GM13976 (cell line): ENCODE measurements at regions of chr1 and their contacts with region 1.

Region 1: GRCh38 chr1:231584921-231585320 is 41.7 kb upstream of the DISC1 start:
- DNase-seq: no peak
- CTCF ChIP-seq: no peak

Region 2: DNA sequence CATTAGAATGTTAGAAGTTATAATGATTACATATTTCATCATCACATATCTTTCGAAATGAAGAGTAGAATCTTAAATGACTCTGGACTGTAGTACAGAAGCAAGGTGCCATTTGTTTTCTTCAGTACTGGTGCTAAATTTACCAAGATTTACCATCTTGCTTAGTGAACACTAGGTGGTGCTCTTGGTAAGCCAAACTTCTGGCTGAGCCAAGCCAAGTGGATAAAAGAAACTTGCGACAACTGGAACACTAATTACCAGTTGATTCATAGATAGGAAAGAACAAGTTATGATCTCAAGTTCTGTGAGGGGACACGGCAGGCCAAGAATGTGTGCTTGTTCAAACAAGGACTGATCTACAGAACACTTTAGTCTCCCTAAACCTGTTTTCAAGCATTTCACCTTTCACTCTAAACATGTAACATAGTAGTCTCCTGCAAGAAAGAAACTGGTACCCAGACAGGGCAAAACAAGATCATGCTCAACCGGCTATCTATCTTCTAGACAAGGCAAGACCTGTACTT is 227.0 kb before region 1 on chr1:
- in situ Hi-C with region 1: loop called (anchors 5 kb)
- DNase-seq: peak; percentile 68
- CTCF ChIP-seq: peak; percentile 67

Region 3: GRCh38 chr1:231428377-231428776 is 156.5 kb before region 1 on chr1:
- in situ Hi-C with region 1: no loop called
- DNase-seq: no peak
- CTCF ChIP-seq: no peak